PC-3 (cell line): ENCODE measurements at regions of chr4 and their contacts with region 1.

Region 1: DNA sequence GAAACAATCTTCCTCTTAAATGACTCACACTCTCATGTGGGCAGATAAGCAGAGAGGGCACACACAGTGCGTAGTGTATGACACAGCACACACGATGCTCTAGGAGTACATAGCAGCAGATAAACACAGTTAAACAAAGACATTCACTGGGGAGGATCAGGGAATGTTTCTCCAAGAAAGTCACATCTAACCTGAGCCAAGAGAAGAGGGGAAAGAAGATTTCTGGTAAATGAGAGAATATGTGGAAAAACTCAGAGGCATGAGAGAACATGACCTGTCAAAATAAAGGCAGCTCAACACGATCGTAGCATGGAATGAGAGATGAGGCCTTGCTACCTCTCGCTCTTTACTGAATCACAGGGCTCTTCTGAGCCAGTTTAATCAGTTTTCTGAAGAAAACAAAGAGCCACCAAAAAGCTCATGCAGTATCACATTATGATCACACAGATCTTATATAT is 251.0 kb downstream of the ANK2 start:
- DNase-seq: peak; percentile 66
- ATAC-seq: peak; percentile 90
- H3K4me3 ChIP-seq: no peak overlapping the region
- H3K27ac ChIP-seq: peak overlapping the region; percentile 70
- H3K4me1 ChIP-seq: peaks cover 10% of the 10 kb centered on the region
- H3K27me3 ChIP-seq: no peaks in the 10 kb centered on the region
- CTCF ChIP-seq: no peak

Region 2: DNA sequence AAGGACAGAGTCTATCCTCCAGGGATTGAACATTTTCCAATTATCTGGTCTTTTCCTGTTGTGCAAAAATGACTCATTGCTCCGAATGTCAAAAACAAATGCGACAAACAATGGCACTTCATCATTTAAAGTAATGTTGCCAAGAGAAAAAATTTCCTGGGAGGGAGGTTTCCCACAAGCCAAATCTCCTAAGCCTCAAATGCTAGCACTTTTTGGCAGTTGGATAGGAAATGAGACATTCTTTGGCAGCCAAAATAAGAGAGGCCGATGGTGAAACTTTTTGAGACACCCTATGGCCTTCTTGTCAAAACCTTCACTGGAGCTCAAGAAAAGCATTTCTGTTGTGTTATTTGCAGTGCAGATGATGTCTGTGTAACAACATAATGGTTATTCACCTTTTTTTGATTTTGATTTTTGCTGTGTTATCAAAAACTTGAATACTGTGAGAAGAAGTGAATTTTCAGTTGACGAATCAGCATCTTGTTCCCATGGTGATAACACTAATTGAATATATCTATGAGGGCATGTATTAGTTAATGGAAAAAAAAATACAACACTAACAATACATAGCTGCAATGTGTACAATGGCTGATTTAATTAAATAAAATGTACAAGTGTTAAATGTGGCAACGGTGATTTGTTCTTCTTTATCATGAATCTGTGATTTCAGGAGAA is 82.7 kb after region 1 on chr4:
- CTCF ChIA-PET with region 1: no interaction called
- POLR2A ChIA-PET with region 1: interaction called, 3 read pairs
- intact Hi-C with region 1: loop called (anchors 2 kb)
- DNase-seq: peak; percentile 87
- ATAC-seq: peak; percentile 53
- H3K4me3 ChIP-seq: no peak overlapping the region
- H3K27ac ChIP-seq: peak overlapping the region; percentile 85
- H3K4me1 ChIP-seq: peaks cover 28% of the 10 kb centered on the region
- H3K27me3 ChIP-seq: no peaks in the 10 kb centered on the region
- CTCF ChIP-seq: no peak